H1 (cell line): ENCODE measurements at regions of chr22 and their contacts with region 1.

Region 1: GRCh38 chr22:39306581-39307361 is 12.7 kb downstream of the RPL3 start:
- DNase-seq: peak in 1 of 2 experiments; percentile 83
- H3K4me3 ChIP-seq: no peak overlapping the region
- H3K27ac ChIP-seq: no peak overlapping the region
- H3K4me1 ChIP-seq: peaks cover 0 to 14% (median 11%) of the 10 kb centered on the region in 4 experiments; a peak in 5 of 7 replicates
- H3K27me3 ChIP-seq: no peaks in the 10 kb centered on the region
- CTCF ChIP-seq: peak; percentile 82 to 86 (median 83)
- EP300 ChIP-seq: no peak
- POLR2A ChIP-seq: no peak
- RAD21 ChIP-seq: peak; percentile 84 to 87

Region 2: GRCh38 chr22:39148747-39149561 is 157.8 kb before region 1 on chr22:
- CTCF ChIA-PET with region 1: interaction called, 13 read pairs
- POLR2A ChIA-PET with region 1: interaction called, 4 read pairs
- DNase-seq: peak in 1 of 2 experiments; percentile 80
- H3K4me3 ChIP-seq: no peak overlapping the region
- H3K27ac ChIP-seq: peak overlapping the region; percentile 47
- H3K4me1 ChIP-seq: peaks cover 7 to 40% (median 30%) of the 10 kb centered on the region in 4 experiments
- H3K27me3 ChIP-seq: peaks cover 0 to 12% (median 11%) of the 10 kb centered on the region in 4 experiments; a peak in 6 of 7 replicates
- CTCF ChIP-seq: no peak
- EP300 ChIP-seq: no peak
- POLR2A ChIP-seq: 0 out of 3 replicates have a peak, but pooled peaks of 1 of the 2 experiments have one; percentile 39
- RAD21 ChIP-seq: no peak

Region 3: GRCh38 chr22:39215426-39216120 is 91.2 kb before region 1 on chr22:
- CTCF ChIA-PET with region 1: interaction called, 24 read pairs
- POLR2A ChIA-PET with region 1: interaction called, 19 read pairs
- DNase-seq: peak in 1 of 2 experiments; percentile 67
- H3K4me3 ChIP-seq: no peak overlapping the region
- H3K27ac ChIP-seq: no peak overlapping the region; the same call in 1 of the 2 replicates
- H3K4me1 ChIP-seq: peaks cover 15 to 30% (median 20%) of the 10 kb centered on the region in 4 experiments
- H3K27me3 ChIP-seq: no peaks in the 10 kb centered on the region
- CTCF ChIP-seq: peak; percentile 48 to 79 (median 76); a peak in 3 of 4 replicates
- EP300 ChIP-seq: no peak
- POLR2A ChIP-seq: no peak
- RAD21 ChIP-seq: peak; percentile 42 to 59

Region 4: GRCh38 chr22:39236321-39237317 is 70.2 kb before region 1 on chr22:
- CTCF ChIA-PET with region 1: interaction called, 17 read pairs
- POLR2A ChIA-PET with region 1: interaction called, 34 read pairs
- DNase-seq: no peak
- H3K4me3 ChIP-seq: no peak overlapping the region
- H3K27ac ChIP-seq: no peak overlapping the region
- H3K4me1 ChIP-seq: peaks cover 4 to 33% (median 28%) of the 10 kb centered on the region in 4 experiments
- H3K27me3 ChIP-seq: peaks cover 0 to 28% (median 16%) of the 10 kb centered on the region in 4 experiments; a peak in 5 of 7 replicates
- CTCF ChIP-seq: no peak
- EP300 ChIP-seq: no peak
- POLR2A ChIP-seq: no peak
- RAD21 ChIP-seq: no peak

Region 5: GRCh38 chr22:39292561-39293098 is 14.1 kb before region 1 on chr22:
- CTCF ChIA-PET with region 1: interaction called, 20 read pairs
- POLR2A ChIA-PET with region 1: interaction called, 692 read pairs
- DNase-seq: peak in 1 of 2 experiments; percentile 62
- H3K4me3 ChIP-seq: no peak overlapping the region
- H3K27ac ChIP-seq: no peak overlapping the region
- H3K4me1 ChIP-seq: peaks cover 0 to 16% (median 7%) of the 10 kb centered on the region in 4 experiments; a peak in 6 of 7 replicates
- H3K27me3 ChIP-seq: no peaks in the 10 kb centered on the region; a peak in 1 of 7 replicates
- CTCF ChIP-seq: no peak
- EP300 ChIP-seq: no peak
- POLR2A ChIP-seq: no peak
- RAD21 ChIP-seq: no peak

Region 6: GRCh38 chr22:39520054-39520891 is 213.5 kb after region 1 on chr22 and contains the start of gene ATF4:
- CTCF ChIA-PET with region 1: interaction called, 3 read pairs
- POLR2A ChIA-PET with region 1: interaction called, 10 read pairs
- DNase-seq: peak; percentile 93 to 96
- H3K4me3 ChIP-seq: peak within 1 kb of the TSS; percentile 93 to 99 (median 95)
- H3K27ac ChIP-seq: peak within 1 kb of the TSS; percentile 99
- H3K4me1 ChIP-seq: peaks cover 0 to 12% (median 5%) of the 10 kb centered on the region in 4 experiments; a peak in 4 of 7 replicates
- H3K27me3 ChIP-seq: peaks cover 0 to 6% (median 2%) of the 10 kb centered on the region in 4 experiments; a peak in 3 of 7 replicates
- CTCF ChIP-seq: no peak
- EP300 ChIP-seq: no peak; a peak in 1 of 3 replicates
- POLR2A ChIP-seq: peak; percentile 96 to 98
- RAD21 ChIP-seq: no peak
- total RNA-seq, gene ATF4: 543 and 553 TPM in 2 replicates